PC-9 (cell line): ENCODE measurements at regions of chr11 and their contacts with region 1.

Region 1: GRCh38 chr11:64448599-64449556 is 89.9 kb downstream of the RPS6KA4 start:
- DNase-seq: peak; percentile 60 to 89
- H3K4me3 ChIP-seq: peak overlapping the region; percentile 40; the same call in 1 of the 2 replicates
- H3K27ac ChIP-seq: no peak overlapping the region
- H3K4me1 ChIP-seq: peaks cover 16% of the 10 kb centered on the region
- H3K27me3 ChIP-seq: peaks cover 30% of the 10 kb centered on the region
- CTCF ChIP-seq: peak; percentile 92

Region 2: GRCh38 chr11:64409707-64410403 is 39.0 kb before region 1 on chr11:
- CTCF ChIA-PET with region 1: interaction called, 11 read pairs
- POLR2A ChIA-PET with region 1: no interaction called
- intact Hi-C with region 1: no loop called
- DNase-seq: no peak
- H3K4me3 ChIP-seq: no peak overlapping the region
- H3K27ac ChIP-seq: no peak overlapping the region
- H3K4me1 ChIP-seq: peaks cover 7% of the 10 kb centered on the region; the same call in 1 of the 2 replicates
- H3K27me3 ChIP-seq: no peaks in the 10 kb centered on the region
- CTCF ChIP-seq: no peak

Region 3: DNA sequence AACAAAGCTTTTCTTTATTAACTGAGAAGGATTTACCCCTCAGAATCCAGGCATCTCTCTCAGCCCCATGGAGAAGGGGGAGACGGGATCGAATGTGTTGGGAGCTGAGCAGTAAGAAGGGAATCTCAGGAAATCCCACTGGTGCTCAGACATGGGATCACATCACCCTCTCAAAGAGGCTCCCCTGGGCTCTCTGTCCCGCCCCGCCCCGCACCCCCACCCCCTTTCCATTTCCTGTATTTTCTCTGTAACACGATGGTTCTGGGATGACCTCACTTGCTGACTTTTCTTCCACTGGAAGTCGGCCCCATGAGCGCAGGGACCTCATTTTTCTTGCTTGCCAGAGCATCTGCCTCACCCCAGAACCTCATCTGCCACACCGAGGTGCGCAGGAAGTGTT is 10.1 kb after region 1 on chr11:
- CTCF ChIA-PET with region 1: no interaction called
- POLR2A ChIA-PET with region 1: no interaction called
- intact Hi-C with region 1: no loop called
- DNase-seq: no peak
- H3K4me3 ChIP-seq: no peak overlapping the region
- H3K27ac ChIP-seq: no peak overlapping the region
- H3K4me1 ChIP-seq: no peaks in the 10 kb centered on the region
- H3K27me3 ChIP-seq: peaks cover 78% of the 10 kb centered on the region
- CTCF ChIP-seq: no peak

Region 4: GRCh38 chr11:64553551-64554201 is 104.8 kb after region 1 on chr11:
- CTCF ChIA-PET with region 1: no interaction called
- POLR2A ChIA-PET with region 1: no interaction called
- intact Hi-C with region 1: loop called (anchors 2 kb)
- DNase-seq: peak in 1 of 2 experiments; percentile 58
- H3K4me3 ChIP-seq: no peak overlapping the region
- H3K27ac ChIP-seq: no peak overlapping the region
- H3K4me1 ChIP-seq: peaks cover 10% of the 10 kb centered on the region; the same call in 1 of the 2 replicates
- H3K27me3 ChIP-seq: no peaks in the 10 kb centered on the region
- CTCF ChIP-seq: peak; percentile 100